RWPE1 (cell line): ENCODE measurements at regions of chr20 and their contacts with region 1.

Region 1: GRCh38 chr20:22339091-22339881 is 245.1 kb downstream of the FOXA2 start:
- DNase-seq: peak; percentile 50
- H3K27ac ChIP-seq: peak overlapping the region; percentile 66
- CTCF ChIP-seq: peak; percentile 89

Region 2: DNA sequence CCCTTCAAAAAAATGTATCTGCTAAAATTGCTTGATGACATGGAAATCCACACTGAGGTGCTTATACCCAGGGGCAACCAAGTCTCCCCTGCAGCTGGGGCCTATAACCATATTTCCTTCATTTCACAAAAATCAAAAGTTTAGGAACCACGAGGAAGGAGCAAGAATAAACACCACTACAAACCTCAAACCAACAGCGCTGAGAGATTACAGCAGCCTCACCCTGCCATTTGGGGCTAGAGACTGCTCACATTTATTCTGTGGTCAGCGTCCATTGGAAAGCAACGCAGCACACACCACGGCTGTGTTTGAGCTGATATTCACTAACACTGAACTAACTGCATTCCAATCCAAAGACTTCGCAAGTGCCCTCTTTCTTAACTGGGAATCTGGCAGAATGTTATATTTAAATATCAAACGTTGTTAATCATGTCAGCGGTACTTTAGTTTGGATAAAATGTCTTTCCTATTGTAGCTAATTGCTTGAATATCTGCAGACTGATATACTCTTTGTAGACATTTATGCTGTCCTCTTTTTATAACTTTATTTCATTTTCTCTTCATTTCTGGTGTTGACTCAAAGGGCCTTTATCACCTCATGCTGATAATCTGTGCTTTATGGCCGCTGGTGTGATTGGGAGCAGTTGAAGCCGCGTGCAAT is 150.5 kb after region 1 on chr20:
- CTCF ChIA-PET with region 1: interaction called, 10 read pairs
- POLR2A ChIA-PET with region 1: no interaction called
- DNase-seq: no peak
- H3K27ac ChIP-seq: no peak overlapping the region
- CTCF ChIP-seq: no peak

Region 3: DNA sequence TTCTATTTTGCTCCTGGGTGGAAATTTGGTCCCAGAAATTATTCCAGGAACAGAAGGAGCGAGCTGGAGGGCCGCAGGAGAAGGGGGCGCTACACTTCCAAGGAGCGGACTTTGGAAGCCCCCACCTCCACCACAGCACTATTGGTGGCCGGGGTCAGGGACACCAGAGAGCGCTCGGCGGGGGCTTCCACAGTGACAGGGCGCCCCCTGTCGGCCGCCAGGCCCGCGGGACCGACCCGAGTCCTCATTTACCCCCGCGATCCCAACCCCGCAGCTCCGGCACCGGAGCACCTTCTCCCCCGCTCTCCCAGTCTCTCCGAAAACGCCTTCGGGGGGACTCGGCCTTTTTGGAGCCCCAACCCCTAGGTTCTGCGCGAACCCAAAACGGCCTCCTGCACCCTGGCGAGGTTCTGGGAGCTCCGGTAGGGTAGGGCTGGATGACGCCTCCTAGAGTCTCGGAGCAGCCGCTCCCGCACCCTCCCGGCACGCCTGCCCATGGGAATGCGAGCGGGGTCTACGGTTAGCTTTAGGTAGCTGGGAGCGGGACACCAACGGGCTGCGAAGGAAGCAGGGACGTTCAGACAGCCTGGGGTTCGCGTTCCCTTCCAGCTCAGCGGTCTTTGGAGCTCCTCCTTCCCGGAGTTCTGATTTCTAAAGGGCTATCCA is 247.5 kb after region 1 on chr20:
- CTCF ChIA-PET with region 1: interaction called, 23 read pairs
- POLR2A ChIA-PET with region 1: no interaction called
- DNase-seq: peak; percentile 50
- H3K27ac ChIP-seq: no peak overlapping the region
- CTCF ChIP-seq: peak; percentile 80

Region 4: GRCh38 chr20:22684072-22684762 is 344.9 kb after region 1 on chr20:
- CTCF ChIA-PET with region 1: interaction called, 37 read pairs
- POLR2A ChIA-PET with region 1: no interaction called
- DNase-seq: peak; percentile 77
- H3K27ac ChIP-seq: no peak overlapping the region
- CTCF ChIP-seq: peak; percentile 94